ENCODE measurements at regions of chrX and their contacts with region 1.

Region 1: GRCh38 chrX:13646154-13646549 is 6.8 kb upstream of the TCEANC start:
- DNase-seq: peak; percentile 55
- ATAC-seq: no peak
- H3K4me3 Mint-ChIP-seq: no peak overlapping the region
- H3K27ac Mint-ChIP-seq: no peak overlapping the region
- H3K4me1 Mint-ChIP-seq: peaks cover 8% of the 10 kb centered on the region
- H3K27me3 Mint-ChIP-seq: no peaks in the 10 kb centered on the region

Region 2: DNA sequence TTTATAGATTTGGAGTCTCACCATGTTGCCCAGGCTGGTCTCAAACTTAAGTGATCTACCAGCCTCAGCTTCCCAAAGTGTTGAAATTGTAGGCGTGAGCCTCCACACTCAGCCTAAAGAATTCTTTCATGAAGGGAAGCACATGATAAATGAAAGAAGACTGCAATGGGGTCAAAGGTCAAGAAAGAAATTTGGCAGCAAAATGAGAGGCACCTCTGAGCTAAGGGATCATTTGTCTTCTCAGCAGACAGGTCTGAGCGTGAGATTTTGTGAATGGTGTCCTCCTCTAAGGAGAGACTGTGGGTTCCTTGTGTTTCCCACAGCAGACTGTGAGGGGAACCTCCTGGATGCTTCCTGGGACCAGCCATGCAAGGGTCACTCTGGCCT is 134.2 kb before region 1 on chrX:
- CTCF ChIA-PET with region 1: interaction called, 50 read pairs
- POLR2A ChIA-PET with region 1: no interaction called
- DNase-seq: no peak
- ATAC-seq: no peak
- H3K4me3 Mint-ChIP-seq: no peak overlapping the region
- H3K27ac Mint-ChIP-seq: no peak overlapping the region
- H3K4me1 Mint-ChIP-seq: peaks cover 4% of the 10 kb centered on the region
- H3K27me3 Mint-ChIP-seq: no peaks in the 10 kb centered on the region

Region 3: DNA sequence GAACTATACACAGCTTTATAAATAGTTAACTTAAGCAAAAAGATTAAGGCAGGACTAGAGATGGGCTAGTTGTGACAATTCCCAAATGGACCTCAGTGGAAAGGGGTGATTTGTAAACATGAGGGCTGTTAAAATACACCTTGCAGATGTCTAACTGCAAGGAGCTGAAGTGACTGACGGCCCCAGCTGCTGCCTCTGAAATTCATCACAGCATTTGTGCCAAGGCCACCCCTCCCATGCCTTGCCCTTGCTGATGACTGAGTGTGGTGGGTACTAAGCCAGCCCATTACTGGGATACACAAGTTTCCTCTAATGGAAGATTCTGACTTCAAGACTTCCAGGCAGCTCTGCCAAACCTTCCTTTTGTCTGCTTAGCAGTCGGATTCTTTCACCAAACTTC is 100.4 kb before region 1 on chrX:
- CTCF ChIA-PET with region 1: no interaction called
- POLR2A ChIA-PET with region 1: no interaction called
- DNase-seq: no peak
- ATAC-seq: no peak
- H3K4me3 Mint-ChIP-seq: no peak overlapping the region
- H3K27ac Mint-ChIP-seq: no peak overlapping the region
- H3K4me1 Mint-ChIP-seq: no peaks in the 10 kb centered on the region
- H3K27me3 Mint-ChIP-seq: peaks cover 14% of the 10 kb centered on the region

Region 4: GRCh38 chrX:13669246-13669737 is 23.1 kb after region 1 on chrX:
- CTCF ChIA-PET with region 1: no interaction called
- POLR2A ChIA-PET with region 1: no interaction called
- DNase-seq: peak; percentile 29
- ATAC-seq: peak; percentile 49
- H3K4me3 Mint-ChIP-seq: peak overlapping the region; percentile 15
- H3K27ac Mint-ChIP-seq: peak overlapping the region; percentile 72
- H3K4me1 Mint-ChIP-seq: peaks cover 6% of the 10 kb centered on the region
- H3K27me3 Mint-ChIP-seq: no peaks in the 10 kb centered on the region

Region 5: GRCh38 chrX:14039344-14039743 is 393.2 kb after region 1 on chrX:
- CTCF ChIA-PET with region 1: no interaction called
- POLR2A ChIA-PET with region 1: no interaction called
- DNase-seq: peak; percentile 70
- ATAC-seq: peak; percentile 53
- H3K4me3 Mint-ChIP-seq: no peak overlapping the region
- H3K27ac Mint-ChIP-seq: no peak overlapping the region
- H3K4me1 Mint-ChIP-seq: peaks cover 3% of the 10 kb centered on the region
- H3K27me3 Mint-ChIP-seq: peaks cover 16% of the 10 kb centered on the region

Measured in activated CD8-positive, alpha-beta T cell treated with anti-CD3 and anti-CD28 coated beads, Interleukin-2, amount 10 ng/mL, durations not matched to agents 7 days and 5 days (primary cell).